ENCODE measurements at regions of chr13 and their contacts with region 1.

Region 1: GRCh38 chr13:102596147-102597028 is at the start of gene TPP2:
- DNase-seq: peak; percentile 99
- H3K4me3 ChIP-seq: peak within 1 kb of the TSS; percentile 54 to 95 (median 86)
- H3K27ac ChIP-seq: peak within 1 kb of the TSS; percentile 96 to 100 (median 98)
- H3K4me1 ChIP-seq: peaks cover 42 to 85% (median 65%) of the 10 kb centered on the region in 6 donors
- H3K27me3 ChIP-seq: no peaks in the 10 kb centered on the region
- CTCF ChIP-seq: peak in 4 of 11 experiments; percentile 6 to 38 (median 21)
- POLR2A ChIP-seq: peak; percentile 1 to 84 (median 44)
- total RNA-seq, gene TPP2: 47.3 to 95.5 (median 58.2) TPM

Region 2: DNA sequence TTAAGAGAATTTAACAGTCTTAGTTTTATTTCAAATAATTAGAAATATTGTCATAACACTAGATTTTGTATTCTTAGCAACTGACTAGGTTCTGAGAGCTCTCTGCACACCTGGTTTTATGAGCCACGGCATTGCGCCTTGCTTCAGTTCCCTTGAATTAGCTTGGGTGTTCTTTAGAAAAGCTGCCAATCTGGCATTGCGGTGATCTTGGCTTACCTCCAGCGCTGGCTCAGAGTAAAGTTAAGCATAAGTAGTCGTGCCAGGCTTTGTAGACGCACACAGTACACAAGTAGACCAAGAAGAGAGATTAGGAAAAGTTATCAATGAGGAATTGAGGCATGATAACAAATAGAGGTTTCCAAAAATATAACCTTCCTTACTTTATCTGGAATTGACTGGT is 46.1 kb after region 1 on chr13:
- intact Hi-C with region 1: loop called (anchors 10 kb)
- DNase-seq: no peak
- H3K4me3 ChIP-seq: no peak overlapping the region
- H3K27ac ChIP-seq: no peak overlapping the region
- H3K4me1 ChIP-seq: peaks cover 0 to 9% (median 0%) of the 10 kb centered on the region in 6 donors
- H3K27me3 ChIP-seq: no peaks in the 10 kb centered on the region
- CTCF ChIP-seq: no peak
- POLR2A ChIP-seq: no peak

Region 3: DNA sequence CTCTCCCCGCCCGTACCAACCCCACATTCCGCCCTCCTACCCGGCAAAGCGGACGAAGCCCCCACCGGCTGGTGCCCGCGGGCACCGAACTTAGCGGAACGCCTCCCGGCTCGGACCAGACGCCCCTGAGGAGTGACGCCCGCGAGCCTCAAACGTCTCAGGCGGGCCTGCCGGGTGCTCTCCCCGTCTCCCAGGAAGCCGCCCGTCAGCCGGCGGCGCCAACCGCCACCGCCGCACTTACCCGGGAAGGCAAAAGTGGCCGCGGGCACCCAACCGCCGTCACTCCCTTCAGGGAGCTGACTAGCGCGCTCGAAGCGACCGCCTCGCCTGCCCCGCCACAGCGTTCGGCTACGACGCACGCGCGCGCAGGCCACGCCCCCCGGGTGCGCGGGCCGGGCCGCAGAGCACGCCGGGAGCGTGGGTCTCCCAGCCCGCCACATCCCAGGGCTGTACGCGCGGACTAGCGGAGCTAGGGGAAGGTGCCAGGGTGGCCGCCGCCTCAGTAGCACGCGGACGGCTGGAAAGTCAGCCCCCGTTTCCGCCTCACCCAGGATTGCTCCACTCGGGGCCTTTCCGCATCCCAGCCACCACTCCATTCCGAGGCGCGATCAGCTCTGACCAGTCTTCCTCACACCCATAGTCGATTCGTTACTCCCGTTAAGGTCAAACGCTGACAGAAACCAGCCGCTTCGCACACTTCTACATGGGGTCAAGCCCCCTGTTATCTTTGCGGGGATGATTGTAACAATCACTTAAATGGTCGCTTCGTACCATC is 177.2 kb after region 1 on chr13 and contains the start of gene TEX30:
- intact Hi-C with region 1: loop called (anchors 10 kb)
- DNase-seq: peak; percentile 97
- H3K4me3 ChIP-seq: peak within 1 kb of the TSS; percentile 70 to 97 (median 87)
- H3K27ac ChIP-seq: peak within 1 kb of the TSS; percentile 83 to 93 (median 89)
- H3K4me1 ChIP-seq: peaks cover 8 to 37% (median 23%) of the 10 kb centered on the region in 6 donors
- H3K27me3 ChIP-seq: no peaks in the 10 kb centered on the region
- CTCF ChIP-seq: peak in 5 of 11 experiments; percentile 9 to 37 (median 18)
- POLR2A ChIP-seq: peak; percentile 53 to 77 (median 68)
- total RNA-seq, gene TEX30: 4.4 to 10.9 (median 5.6) TPM

Region 4: DNA sequence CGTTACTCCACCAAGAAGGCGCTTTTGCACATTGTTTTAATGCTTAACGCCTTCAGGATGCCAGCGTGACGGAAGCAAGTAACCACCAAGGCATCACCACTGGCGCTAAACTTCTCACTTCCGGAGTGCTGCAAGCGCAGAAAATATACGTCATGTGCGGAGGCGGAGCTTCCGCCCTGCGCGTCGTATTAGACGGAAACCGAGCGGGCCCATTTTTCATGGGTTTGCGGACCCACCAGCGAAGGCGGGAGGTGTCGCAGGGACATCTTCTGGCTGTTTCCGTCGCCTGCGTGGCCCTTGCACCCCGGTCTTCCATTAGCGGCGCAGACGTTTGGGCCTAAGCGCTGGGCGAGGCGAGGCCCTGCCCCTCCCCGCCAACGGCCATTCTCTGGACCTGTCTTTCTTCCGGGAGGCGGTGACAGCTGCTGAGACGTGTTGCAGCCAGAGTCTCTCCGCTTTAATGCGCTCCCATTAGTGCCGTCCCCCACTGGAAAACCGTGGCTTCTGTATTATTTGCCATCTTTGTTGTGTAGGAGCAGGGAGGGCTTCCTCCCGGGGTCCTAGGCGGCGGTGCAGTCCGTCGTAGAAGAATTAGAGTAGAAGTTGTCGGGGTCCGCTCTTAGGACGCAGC is 249.4 kb after region 1 on chr13 and contains the start of gene ERCC5:
- intact Hi-C with region 1: loop called (anchors 5 kb)
- DNase-seq: peak; percentile 96
- H3K4me3 ChIP-seq: peak within 1 kb of the TSS; percentile 84 to 97 (median 93)
- H3K27ac ChIP-seq: peak within 1 kb of the TSS; percentile 94 to 100 (median 98)
- H3K4me1 ChIP-seq: peaks cover 21 to 52% (median 44%) of the 10 kb centered on the region in 6 donors
- H3K27me3 ChIP-seq: no peaks in the 10 kb centered on the region
- CTCF ChIP-seq: peak in 3 of 11 experiments; percentile 17 to 18 (median 17)
- POLR2A ChIP-seq: peak in 2 of 3 donors; percentile 64 to 79
- total RNA-seq, gene ERCC5: 55.1 to 101 (median 76.6) TPM

Region 5: GRCh38 chr13:103716718-103717117 is 1120.3 kb after region 1 on chr13:
- intact Hi-C with region 1: no loop called
- DNase-seq: no peak
- H3K4me3 ChIP-seq: no peak overlapping the region
- H3K27ac ChIP-seq: no peak overlapping the region
- H3K4me1 ChIP-seq: no peaks in the 10 kb centered on the region
- H3K27me3 ChIP-seq: no peaks in the 10 kb centered on the region
- CTCF ChIP-seq: no peak
- POLR2A ChIP-seq: no peak

Measured in spleen (tissue), 13 donors.